IMR-90 (cell line): ENCODE measurements at regions of chr1 and their contacts with region 1.

Region 1: DNA sequence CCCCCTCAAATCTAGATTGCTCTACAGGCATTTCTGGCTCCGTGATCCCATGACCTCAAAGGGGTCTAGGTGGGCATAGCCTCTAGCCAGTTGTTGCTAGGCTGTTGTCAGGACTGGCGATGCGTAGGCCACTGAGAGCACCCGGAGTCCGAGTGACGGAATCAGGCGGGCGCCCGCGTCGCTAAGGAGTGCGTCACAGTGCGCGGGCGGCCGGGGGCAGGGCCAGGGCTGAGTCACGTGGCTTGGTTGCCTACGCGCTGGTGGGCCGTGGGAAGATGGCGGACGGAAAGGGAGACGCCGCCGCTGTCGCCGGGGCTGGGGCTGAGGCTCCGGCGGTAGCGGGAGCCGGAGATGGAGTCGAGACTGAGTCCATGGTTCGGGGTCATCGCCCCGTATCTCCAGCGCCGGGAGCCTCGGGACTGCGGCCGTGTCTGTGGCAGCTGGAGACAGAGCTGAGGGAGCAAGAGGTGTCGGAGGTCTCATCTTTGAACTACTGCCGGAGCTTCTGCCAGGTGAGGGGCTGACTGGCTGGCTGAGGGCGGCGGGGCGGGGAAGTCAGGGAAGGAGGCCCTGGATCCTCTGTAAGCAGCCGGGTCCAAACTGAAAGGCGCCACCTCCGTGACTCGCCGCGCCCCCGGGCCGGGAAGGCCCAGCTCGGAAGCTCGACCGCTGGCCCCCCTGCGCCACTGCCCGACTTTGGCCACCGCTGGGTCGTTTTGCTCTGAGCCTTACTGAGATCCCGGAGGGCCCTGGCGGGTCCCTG is at the start of gene RLF:
- DNase-seq: peak; percentile 93
- ATAC-seq: peak; percentile 97
- H3K4me3 ChIP-seq: peak within 1 kb of the TSS; percentile 79
- H3K27ac ChIP-seq: peak within 1 kb of the TSS; percentile 90
- H3K4me1 ChIP-seq: peaks cover 3% of the 10 kb centered on the region
- H3K27me3 ChIP-seq: peaks cover 3% of the 10 kb centered on the region; the same call in 1 of the 2 replicates
- CTCF ChIP-seq: no peak
- POLR2A ChIP-seq: peak; percentile 99
- RAD21 ChIP-seq: no peak
- total RNA-seq, gene RLF: 29.8 and 33.1 TPM in 2 replicates

Region 2: GRCh38 chr1:39701049-39701439 is 460.3 kb before region 1 on chr1:
- CTCF ChIA-PET with region 1: no interaction called
- POLR2A ChIA-PET with region 1: no interaction called
- dilution Hi-C with region 1: no loop called
- in situ Hi-C with region 1: no loop called
- intact Hi-C with region 1: no loop called
- DNase-seq: peak; percentile 56
- ATAC-seq: peak; percentile 53
- H3K4me3 ChIP-seq: no peak overlapping the region
- H3K27ac ChIP-seq: no peak overlapping the region
- H3K4me1 ChIP-seq: peaks cover 2% of the 10 kb centered on the region; the same call in 1 of the 2 replicates
- H3K27me3 ChIP-seq: peaks cover 69% of the 10 kb centered on the region
- CTCF ChIP-seq: no peak
- POLR2A ChIP-seq: no peak
- RAD21 ChIP-seq: no peak

Region 3: DNA sequence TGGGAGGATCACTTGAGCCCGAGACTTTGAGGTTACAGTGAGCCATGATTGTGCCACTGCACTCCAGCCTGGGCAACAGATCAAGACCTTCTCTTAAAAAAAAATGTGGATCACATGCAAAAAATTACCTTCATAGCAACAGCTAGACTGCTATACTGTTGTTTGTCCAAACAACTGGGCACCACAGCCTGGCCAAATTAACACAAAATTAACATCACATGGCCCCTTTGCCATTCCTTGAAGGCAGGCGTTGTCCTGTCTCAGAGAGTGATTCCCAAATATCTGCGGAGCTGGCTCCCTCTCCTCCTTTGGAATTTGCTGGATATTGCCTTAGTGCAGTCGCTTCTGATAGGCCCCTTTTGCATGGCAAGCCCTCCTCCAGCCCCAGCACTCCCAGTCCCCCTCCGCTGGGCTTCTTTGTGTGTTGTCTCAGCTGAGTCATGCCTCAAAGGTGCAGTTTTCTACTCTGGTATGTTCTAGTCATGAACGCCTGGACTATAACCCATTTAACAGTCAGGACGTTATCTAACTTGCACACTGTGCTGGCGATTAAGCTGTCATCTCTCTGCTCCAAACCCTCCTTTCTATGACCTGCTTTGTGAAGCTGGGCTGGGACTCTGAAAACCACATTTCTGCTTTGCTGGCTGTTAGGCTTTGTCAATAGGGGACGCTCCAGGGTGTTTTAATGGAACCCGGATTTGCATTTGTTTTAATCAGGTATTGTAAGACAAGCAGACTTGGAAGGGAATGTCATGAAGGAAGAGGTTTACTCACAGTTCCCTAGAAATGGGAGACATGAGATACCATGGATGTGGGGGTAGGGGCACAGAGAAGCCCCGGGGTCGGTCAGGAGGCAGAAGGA is 450.0 kb before region 1 on chr1:
- CTCF ChIA-PET with region 1: no interaction called
- POLR2A ChIA-PET with region 1: no interaction called
- dilution Hi-C with region 1: no loop called
- in situ Hi-C with region 1: no loop called
- intact Hi-C with region 1: no loop called
- DNase-seq: peak; percentile 30
- ATAC-seq: peak; percentile 54
- H3K4me3 ChIP-seq: no peak overlapping the region
- H3K27ac ChIP-seq: no peak overlapping the region
- H3K4me1 ChIP-seq: no peaks in the 10 kb centered on the region
- H3K27me3 ChIP-seq: peaks cover 67% of the 10 kb centered on the region
- CTCF ChIP-seq: no peak
- POLR2A ChIP-seq: no peak
- RAD21 ChIP-seq: no peak

Region 4: GRCh38 chr1:40183055-40183710 is 21.9 kb after region 1 on chr1:
- CTCF ChIA-PET with region 1: no interaction called
- POLR2A ChIA-PET with region 1: no interaction called
- dilution Hi-C with region 1: no loop called
- in situ Hi-C with region 1: no loop called
- intact Hi-C with region 1: loop called (anchors 2 kb)
- DNase-seq: peak; percentile 45
- ATAC-seq: peak; percentile 54; the same call in 1 of the 2 replicates
- H3K4me3 ChIP-seq: no peak overlapping the region
- H3K27ac ChIP-seq: no peak overlapping the region
- H3K4me1 ChIP-seq: peaks cover 4% of the 10 kb centered on the region
- H3K27me3 ChIP-seq: no peaks in the 10 kb centered on the region
- CTCF ChIP-seq: peak; percentile 47
- POLR2A ChIP-seq: no peak
- RAD21 ChIP-seq: no peak

Region 5: DNA sequence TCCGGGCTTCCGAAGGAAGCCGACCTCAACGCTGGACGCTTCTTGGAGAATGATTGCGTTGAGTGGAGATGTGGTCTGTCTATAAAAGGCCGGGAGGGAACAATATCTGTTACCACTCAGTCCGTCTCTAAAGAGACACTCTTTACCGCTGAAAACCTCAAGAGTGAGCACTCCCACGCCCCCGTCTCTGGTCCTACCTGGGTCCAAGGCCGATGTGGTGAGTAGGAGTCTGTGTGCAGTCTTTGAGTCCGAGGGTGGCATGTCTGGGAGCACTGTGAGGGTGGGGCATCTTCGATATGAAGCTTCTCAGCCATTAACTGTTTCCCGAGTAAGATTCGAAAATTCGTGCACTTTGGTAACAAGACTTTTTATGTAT is 316.4 kb after region 1 on chr1:
- CTCF ChIA-PET with region 1: no interaction called
- POLR2A ChIA-PET with region 1: no interaction called
- dilution Hi-C with region 1: no loop called
- in situ Hi-C with region 1: no loop called
- intact Hi-C with region 1: no loop called
- DNase-seq: peak; percentile 16
- ATAC-seq: peak; percentile 53
- H3K4me3 ChIP-seq: peak overlapping the region; percentile 98
- H3K27ac ChIP-seq: peak overlapping the region; percentile 7; the same call in 1 of the 2 replicates
- H3K4me1 ChIP-seq: 0 out of 2 replicates have a peak, but pooled peaks cover 2% of the 10 kb centered on the region
- H3K27me3 ChIP-seq: no peaks in the 10 kb centered on the region
- CTCF ChIP-seq: no peak
- POLR2A ChIP-seq: no peak
- RAD21 ChIP-seq: no peak